Ascending aorta (tissue), 2 donors: ENCODE measurements at regions of chr1 and their contacts with region 1.

Region 1: DNA sequence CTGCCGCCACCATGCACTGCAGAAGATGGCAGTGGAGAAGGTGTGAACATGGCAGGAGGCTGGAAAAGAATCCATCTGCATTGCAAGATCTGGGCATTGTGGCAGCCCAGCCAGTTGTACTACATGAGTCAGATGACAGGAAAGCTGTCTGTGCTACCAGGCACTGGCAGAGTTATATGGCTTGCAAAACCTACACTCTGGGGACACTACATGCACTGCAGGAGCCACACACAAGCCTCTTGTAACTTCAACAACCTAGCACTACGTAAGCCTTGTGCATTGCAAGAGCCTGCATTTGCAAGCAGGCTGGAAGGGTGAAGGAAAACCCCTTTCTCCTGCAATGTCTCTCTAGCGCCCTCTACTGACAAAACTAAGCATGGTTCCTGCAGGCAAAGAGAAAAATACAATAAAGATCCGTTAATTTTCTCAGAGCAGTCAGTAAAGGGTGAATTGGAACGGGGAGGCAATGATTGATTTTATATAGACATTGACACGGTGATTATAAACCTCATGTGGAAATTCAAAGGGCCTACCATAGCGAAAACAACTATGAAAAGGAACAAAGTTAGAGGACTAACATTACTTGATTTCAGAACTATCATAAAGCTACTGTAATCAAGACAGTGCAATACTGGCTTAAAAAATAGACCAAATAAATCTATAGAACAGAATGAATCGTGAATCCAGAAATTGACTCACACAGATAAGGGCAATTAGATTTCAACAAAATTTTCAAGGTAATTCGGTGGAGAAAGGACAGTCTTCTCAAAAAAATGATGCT is 26.2 kb upstream of the DYNLT5 start:
- DNase-seq: peak; percentile 11 to 78
- H3K4me3 ChIP-seq: no peak overlapping the region
- H3K27ac ChIP-seq: no peak overlapping the region
- H3K4me1 ChIP-seq: no peaks in the 10 kb centered on the region
- H3K27me3 ChIP-seq: no peaks in the 10 kb centered on the region
- CTCF ChIP-seq: peak; percentile 84 to 98 (median 94)

Region 2: GRCh38 chr1:66253330-66253921 is 472.6 kb before region 1 on chr1:
- intact Hi-C with region 1: loop called (anchors 1 kb)
- DNase-seq: no peak
- H3K4me3 ChIP-seq: no peak overlapping the region
- H3K27ac ChIP-seq: no peak overlapping the region
- H3K4me1 ChIP-seq: no peaks in the 10 kb centered on the region
- H3K27me3 ChIP-seq: no peaks in the 10 kb centered on the region
- CTCF ChIP-seq: peak; percentile 72 to 76 (median 74)

Region 3: DNA sequence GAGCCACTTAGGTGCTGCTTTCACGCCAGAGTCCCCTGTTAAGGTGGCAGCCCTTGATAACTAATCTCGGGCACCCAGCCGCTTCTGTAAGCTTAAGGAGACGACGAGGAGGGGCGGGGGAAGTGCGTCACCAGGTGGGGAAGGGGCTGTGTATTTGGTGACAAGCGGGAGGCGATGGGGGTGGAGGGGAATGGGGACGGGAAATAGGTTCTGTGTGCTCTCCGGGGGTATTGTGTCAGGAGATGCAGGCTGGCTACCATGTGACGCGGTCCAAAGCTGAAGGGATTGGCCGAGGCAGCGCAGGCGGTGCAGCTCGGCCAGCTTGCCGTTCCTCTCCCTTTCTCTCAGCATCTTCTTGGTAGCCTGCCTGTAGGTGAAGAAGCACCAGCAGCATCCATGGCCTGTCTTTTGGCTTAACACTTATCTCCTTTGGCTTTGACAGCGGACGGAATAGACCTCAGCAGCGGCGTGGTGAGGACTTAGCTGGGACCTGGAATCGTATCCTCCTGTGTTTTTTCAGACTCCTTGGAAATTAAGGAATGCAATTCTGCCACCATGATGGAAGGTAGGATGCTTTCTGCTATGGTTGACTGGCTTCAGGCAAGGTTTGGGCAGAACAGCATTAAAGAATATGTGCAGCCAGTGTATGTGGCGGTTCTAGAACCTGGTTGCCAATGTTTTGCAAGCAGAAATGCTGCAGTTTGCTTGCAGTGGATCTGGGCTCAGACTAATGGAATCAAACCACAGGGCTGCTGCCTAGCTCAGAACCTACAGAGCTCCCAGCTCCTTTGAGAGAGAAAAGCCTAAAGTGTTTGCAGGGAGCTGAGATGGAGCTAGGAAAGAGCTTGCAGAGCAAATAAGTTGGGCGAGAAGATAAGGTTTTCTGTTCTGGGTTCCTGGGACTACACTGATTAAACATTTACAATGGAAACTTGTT is 192.0 kb before region 1 on chr1 and contains the start of gene SGIP1:
- intact Hi-C with region 1: loop called (anchors 10 kb)
- DNase-seq: peak; percentile 46 to 88
- H3K4me3 ChIP-seq: peak within 1 kb of the TSS; percentile 58 to 71
- H3K27ac ChIP-seq: peak within 1 kb of the TSS; percentile 92 to 95
- H3K4me1 ChIP-seq: peaks cover 3 to 7% of the 10 kb centered on the region in 2 donors
- H3K27me3 ChIP-seq: no peaks in the 10 kb centered on the region
- CTCF ChIP-seq: no peak
- total RNA-seq, gene SGIP1: 1.6 TPM